Activated CD4-positive, alpha-beta T cell treated with anti-CD3 and anti-CD28 coated beads, Interleukin-2, amount 10 ng/mL, durations not matched to agents 24 days and 14 days (primary cell): ENCODE measurements at regions of chr17 and their contacts with region 1.

Region 1: GRCh38 chr17:61452301-61453290 is at the start of gene TBX4:
- DNase-seq: no peak
- H3K4me3 Mint-ChIP-seq: no peak within 1 kb of the TSS
- H3K27ac Mint-ChIP-seq: no peak within 1 kb of the TSS
- H3K4me1 Mint-ChIP-seq: peaks cover 7% of the 10 kb centered on the region
- H3K27me3 Mint-ChIP-seq: peaks cover 73% of the 10 kb centered on the region
- total RNA-seq, gene TBX4: not detected in 2 replicates

Region 2: DNA sequence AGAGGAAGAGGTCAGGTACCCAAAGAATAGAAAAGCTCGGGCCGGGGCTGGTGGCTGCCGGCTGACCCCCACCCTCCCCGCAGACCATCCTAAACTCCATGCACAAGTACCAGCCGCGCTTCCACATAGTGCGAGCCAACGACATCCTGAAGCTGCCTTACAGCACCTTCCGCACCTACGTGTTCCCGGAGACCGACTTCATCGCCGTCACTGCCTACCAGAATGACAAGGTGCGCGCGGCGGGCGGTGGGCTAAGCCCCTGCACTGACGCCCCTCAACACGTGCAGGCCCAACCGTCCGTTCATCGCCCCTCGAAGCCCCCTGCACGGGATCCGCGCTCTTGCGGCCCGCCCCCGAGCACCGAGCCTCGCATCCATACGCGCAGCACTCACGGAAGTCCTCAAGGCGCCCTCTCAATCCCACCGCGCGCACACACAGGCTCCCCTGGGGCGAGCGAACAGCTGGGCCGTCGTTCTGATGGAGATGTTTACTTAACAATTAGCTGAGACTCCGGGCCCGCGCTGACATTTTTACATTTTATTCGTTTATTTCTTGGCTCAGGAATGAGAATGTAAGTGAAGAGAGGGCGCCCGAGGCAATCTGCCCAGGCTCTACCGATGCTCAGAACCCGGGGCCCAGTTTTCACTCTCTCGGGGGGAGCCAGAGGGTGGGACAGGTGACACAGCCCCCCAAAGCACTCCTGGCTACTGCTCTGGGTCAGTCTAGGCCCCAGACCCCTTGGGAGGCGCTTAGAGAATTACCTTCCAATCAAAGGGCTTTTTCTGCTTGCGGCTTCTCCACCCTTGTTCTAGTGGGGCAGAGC is 49.4 kb before region 1 on chr17:
- intact Hi-C with region 1: loop called (anchors 1 kb)
- DNase-seq: no peak
- H3K4me3 Mint-ChIP-seq: peak overlapping the region; percentile 54
- H3K27ac Mint-ChIP-seq: peak overlapping the region; percentile 45
- H3K4me1 Mint-ChIP-seq: peaks cover 14% of the 10 kb centered on the region
- H3K27me3 Mint-ChIP-seq: peaks cover 69% of the 10 kb centered on the region

Region 3: DNA sequence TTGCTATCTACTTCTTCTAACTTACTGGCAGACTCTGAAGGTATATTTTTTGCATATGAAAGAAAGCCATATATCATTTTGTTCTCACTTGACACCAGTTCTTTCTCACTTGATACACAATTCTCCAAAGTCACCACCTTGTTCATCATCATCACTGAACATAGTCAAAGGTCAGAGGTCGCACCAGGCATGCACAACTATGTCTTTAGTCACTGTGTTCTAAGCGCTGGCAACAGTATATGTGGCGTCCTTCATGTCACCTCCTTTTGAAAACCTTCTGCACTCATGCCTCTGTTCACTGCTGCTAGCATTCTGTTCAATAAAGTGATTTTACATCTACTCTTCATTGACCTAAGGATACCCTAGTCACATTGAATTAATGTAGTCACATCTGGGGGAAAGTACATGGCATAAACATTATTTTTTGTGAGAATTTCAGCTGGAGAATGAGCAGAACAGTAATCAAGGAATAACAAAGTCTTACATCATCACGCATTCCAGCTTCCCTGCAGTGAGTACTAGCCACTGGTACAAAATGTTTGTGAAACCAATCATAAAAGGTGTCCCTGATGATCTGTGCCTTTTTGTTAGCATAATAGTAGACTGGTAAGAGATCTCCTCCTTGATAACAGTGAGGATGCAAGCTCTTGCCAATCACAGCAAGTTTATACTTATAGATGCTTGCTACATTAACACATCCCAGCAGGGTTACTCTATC is 20.8 kb before region 1 on chr17:
- intact Hi-C with region 1: no loop called
- DNase-seq: no peak
- H3K4me3 Mint-ChIP-seq: no peak overlapping the region
- H3K27ac Mint-ChIP-seq: no peak overlapping the region
- H3K4me1 Mint-ChIP-seq: no peaks in the 10 kb centered on the region
- H3K27me3 Mint-ChIP-seq: peaks cover 39% of the 10 kb centered on the region